Activated B cell treated with CpG ODN at 0.5 μM for 24 hours (primary cell): ENCODE measurements at regions of chr9 and their contacts with region 1.

Region 1: GRCh38 chr9:129330711-129331279 is 152.7 kb upstream of the IER5L start:
- DNase-seq: no peak
- ATAC-seq: no peak
- H3K4me3 Mint-ChIP-seq: no peak overlapping the region
- H3K27ac Mint-ChIP-seq: no peak overlapping the region
- H3K4me1 Mint-ChIP-seq: peaks cover 15% of the 10 kb centered on the region
- H3K27me3 Mint-ChIP-seq: peaks cover 23% of the 10 kb centered on the region
- CTCF ChIP-seq: no peak

Region 2: GRCh38 chr9:129282272-129283211 is 48.3 kb before region 1 on chr9:
- CTCF ChIA-PET with region 1: no interaction called
- POLR2A ChIA-PET with region 1: no interaction called
- intact Hi-C with region 1: loop called (anchors 1 kb)
- DNase-seq: peak; percentile 12
- ATAC-seq: no peak
- H3K4me3 Mint-ChIP-seq: no peak overlapping the region
- H3K27ac Mint-ChIP-seq: no peak overlapping the region
- H3K4me1 Mint-ChIP-seq: no peaks in the 10 kb centered on the region
- H3K27me3 Mint-ChIP-seq: peaks cover 8% of the 10 kb centered on the region
- CTCF ChIP-seq: no peak

Region 3: DNA sequence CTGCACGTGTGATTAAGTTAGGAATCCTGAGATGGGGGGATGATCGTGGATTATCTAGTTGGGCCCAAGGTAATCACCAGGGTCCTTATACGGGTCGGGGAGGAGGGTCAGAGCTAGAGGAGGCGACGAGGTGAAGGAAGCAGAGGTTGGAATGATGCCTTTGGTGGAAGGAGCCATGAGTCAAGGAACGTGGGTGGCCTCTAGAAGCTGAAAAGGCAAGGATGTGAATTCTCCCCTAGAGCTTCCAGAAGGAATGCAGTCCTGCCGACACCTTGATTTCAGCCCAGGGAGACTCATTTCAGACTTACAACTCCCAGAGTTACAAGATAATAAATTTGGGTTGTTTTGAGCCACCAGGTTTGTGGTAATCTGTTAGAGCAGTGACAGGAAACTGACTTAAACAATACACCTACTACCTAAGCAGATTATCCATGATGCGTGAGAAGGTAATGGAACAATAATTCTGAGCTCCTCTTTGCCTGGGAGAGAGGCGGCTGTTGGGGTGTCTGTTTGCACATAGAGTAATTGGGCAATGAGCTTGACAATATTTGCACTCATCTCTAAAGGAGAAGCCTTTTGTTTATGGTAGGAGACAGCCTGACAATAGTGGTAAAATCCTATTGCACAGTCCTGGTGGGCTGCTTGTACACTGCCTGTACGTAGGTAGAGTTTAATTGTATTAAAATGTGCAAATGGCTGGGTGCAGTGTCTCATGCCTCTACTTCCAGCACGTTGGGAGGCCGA is 23.4 kb before region 1 on chr9:
- CTCF ChIA-PET with region 1: no interaction called
- POLR2A ChIA-PET with region 1: no interaction called
- intact Hi-C with region 1: no loop called
- DNase-seq: no peak
- ATAC-seq: no peak
- H3K4me3 Mint-ChIP-seq: no peak overlapping the region
- H3K27ac Mint-ChIP-seq: peak overlapping the region; percentile 18
- H3K4me1 Mint-ChIP-seq: no peaks in the 10 kb centered on the region
- H3K27me3 Mint-ChIP-seq: peaks cover 30% of the 10 kb centered on the region
- CTCF ChIP-seq: no peak

Region 4: DNA sequence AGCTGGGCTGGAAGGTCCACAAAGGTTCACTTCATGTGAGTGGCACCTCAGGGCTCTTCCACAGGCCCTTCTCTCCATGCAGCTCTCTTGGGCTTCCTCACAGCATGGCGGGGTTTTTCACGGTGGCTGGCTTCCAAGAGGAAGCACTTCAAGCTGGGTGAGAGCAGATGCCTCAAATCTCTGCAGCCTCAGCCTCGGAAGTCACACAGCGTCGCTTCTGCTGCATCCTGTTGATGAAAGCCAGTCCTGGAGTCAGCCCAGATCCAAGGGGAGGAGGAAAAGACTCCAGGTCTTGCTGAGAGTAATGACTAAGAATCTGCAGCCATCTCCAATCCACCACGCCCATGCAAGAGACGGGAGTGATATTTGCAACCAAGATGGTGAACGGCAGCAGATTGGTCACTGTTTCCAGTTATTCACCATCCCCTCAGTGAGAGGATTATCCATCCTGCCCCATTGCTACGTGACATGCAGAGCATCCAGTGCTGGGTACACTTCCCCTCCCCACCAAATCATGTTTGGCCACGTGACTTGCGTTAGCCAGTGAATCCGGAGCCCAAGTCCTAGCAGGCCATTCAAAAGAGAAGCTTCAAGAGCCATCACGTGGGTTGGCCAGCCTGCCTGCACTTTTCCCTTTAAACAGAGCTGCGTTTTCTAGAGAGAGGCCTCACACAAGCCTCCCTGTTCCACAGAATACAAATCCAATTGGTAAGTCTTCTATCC is 116.2 kb after region 1 on chr9:
- CTCF ChIA-PET with region 1: no interaction called
- POLR2A ChIA-PET with region 1: no interaction called
- intact Hi-C with region 1: no loop called
- DNase-seq: no peak
- ATAC-seq: no peak
- H3K4me3 Mint-ChIP-seq: no peak overlapping the region
- H3K27ac Mint-ChIP-seq: no peak overlapping the region
- H3K4me1 Mint-ChIP-seq: no peaks in the 10 kb centered on the region
- H3K27me3 Mint-ChIP-seq: peaks cover 22% of the 10 kb centered on the region
- CTCF ChIP-seq: no peak